ENCODE measurements at regions of chrX and their contacts with region 1.

Region 1: GRCh38 chrX:23901805-23902204 is 5.9 kb downstream of the APOO start:
- DNase-seq: peak; percentile 60
- ATAC-seq: peak; percentile 85
- H3K4me3 ChIP-seq: no peak overlapping the region
- H3K27ac ChIP-seq: peak overlapping the region; percentile 71
- H3K4me1 ChIP-seq: peaks cover 12% of the 10 kb centered on the region
- H3K27me3 ChIP-seq: no peaks in the 10 kb centered on the region
- CTCF ChIP-seq: peak; percentile 46 to 72 (median 50); a peak in 5 of 6 replicates
- EP300 ChIP-seq: no peak
- POLR2A ChIP-seq: no peak
- RAD21 ChIP-seq: peak; percentile 73

Region 2: DNA sequence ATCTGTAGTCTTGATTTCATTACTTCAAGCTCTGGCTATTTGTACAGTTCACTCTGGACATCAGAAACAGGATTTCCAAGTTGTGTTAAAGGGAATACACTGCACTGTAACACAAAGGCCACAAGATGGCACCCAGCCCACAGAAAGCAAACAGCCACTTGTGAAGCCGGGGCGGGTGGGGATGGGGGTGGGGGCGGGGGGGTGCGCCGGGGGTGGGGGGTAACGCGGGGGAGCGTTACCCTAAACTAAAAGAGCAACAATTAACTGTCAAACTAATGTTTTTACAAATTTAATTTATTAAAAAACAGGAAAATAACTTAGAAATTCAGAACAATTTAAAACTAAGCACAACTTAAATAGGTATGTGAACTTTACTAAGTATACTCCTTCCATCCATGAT is 207.2 kb before region 1 on chrX:
- CTCF ChIA-PET with region 1: interaction called, 154 read pairs
- POLR2A ChIA-PET with region 1: interaction called, 7 read pairs
- RAD21 ChIA-PET with region 1: interaction called, 59 read pairs
- SMC1A ChIA-PET with region 1: interaction called, 71 read pairs
- in situ Hi-C with region 1: loop called (anchors 5 kb)
- intact Hi-C with region 1: loop called (anchors 1 kb)
- DNase-seq: peak; percentile 11
- ATAC-seq: peak; percentile 90
- H3K4me3 ChIP-seq: no peak overlapping the region
- H3K27ac ChIP-seq: no peak overlapping the region
- H3K4me1 ChIP-seq: no peaks in the 10 kb centered on the region
- H3K27me3 ChIP-seq: no peaks in the 10 kb centered on the region
- CTCF ChIP-seq: peak; percentile 37 to 70 (median 63); a peak in 5 of 6 replicates
- EP300 ChIP-seq: no peak
- POLR2A ChIP-seq: no peak
- RAD21 ChIP-seq: peak; percentile 76

Region 3: GRCh38 chrX:23732704-23733103 is 169.1 kb before region 1 on chrX:
- CTCF ChIA-PET with region 1: interaction called, 21 read pairs
- POLR2A ChIA-PET with region 1: no interaction called
- RAD21 ChIA-PET with region 1: interaction called, 6 read pairs
- SMC1A ChIA-PET with region 1: interaction called, 8 read pairs
- in situ Hi-C with region 1: no loop called
- intact Hi-C with region 1: no loop called
- DNase-seq: peak; percentile 65
- ATAC-seq: peak; percentile 89
- H3K4me3 ChIP-seq: no peak overlapping the region
- H3K27ac ChIP-seq: peak overlapping the region; percentile 69
- H3K4me1 ChIP-seq: peaks cover 6% of the 10 kb centered on the region
- H3K27me3 ChIP-seq: no peaks in the 10 kb centered on the region
- CTCF ChIP-seq: no peak
- EP300 ChIP-seq: peak; percentile 98
- POLR2A ChIP-seq: no peak
- RAD21 ChIP-seq: no peak

Region 4: DNA sequence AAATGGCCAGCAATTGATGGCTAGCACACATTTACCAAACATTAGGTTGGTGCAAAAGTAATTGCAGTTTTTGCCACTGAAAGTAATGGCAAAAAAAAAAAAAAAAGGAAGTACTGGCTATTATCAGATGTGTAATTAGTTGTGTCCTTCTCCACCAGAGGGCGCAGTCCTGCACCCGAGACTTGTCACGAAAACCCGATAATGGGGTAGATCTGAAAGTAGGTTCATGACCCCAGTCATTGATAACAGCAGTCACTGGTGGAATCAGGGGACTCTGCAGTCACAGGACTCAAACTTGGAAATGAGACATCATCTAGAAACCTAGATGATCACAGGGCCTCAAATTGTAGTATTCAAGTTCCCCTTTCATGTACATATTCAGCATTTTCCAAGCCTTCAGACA is 145.6 kb before region 1 on chrX:
- CTCF ChIA-PET with region 1: interaction called, 20 read pairs
- POLR2A ChIA-PET with region 1: no interaction called
- RAD21 ChIA-PET with region 1: interaction called, 22 read pairs
- SMC1A ChIA-PET with region 1: interaction called, 16 read pairs
- in situ Hi-C with region 1: loop called (anchors 10 kb)
- intact Hi-C with region 1: loop called (anchors 1 kb)
- DNase-seq: peak; percentile 50
- ATAC-seq: peak; percentile 93
- H3K4me3 ChIP-seq: no peak overlapping the region
- H3K27ac ChIP-seq: no peak overlapping the region
- H3K4me1 ChIP-seq: no peaks in the 10 kb centered on the region
- H3K27me3 ChIP-seq: no peaks in the 10 kb centered on the region
- CTCF ChIP-seq: peak; percentile 55 to 60 (median 59)
- EP300 ChIP-seq: peak in 1 of 2 experiments; percentile 45; a peak in 2 of 4 replicates
- POLR2A ChIP-seq: no peak
- RAD21 ChIP-seq: peak; percentile 43

Region 5: GRCh38 chrX:23782863-23783568 is 118.8 kb before region 1 on chrX and contains the start of gene SAT1:
- CTCF ChIA-PET with region 1: interaction called, 123 read pairs
- POLR2A ChIA-PET with region 1: interaction called, 26 read pairs
- RAD21 ChIA-PET with region 1: interaction called, 96 read pairs
- SMC1A ChIA-PET with region 1: interaction called, 82 read pairs
- in situ Hi-C with region 1: loop called (anchors 5 kb)
- intact Hi-C with region 1: loop called (anchors 1 kb)
- DNase-seq: peak; percentile 65
- ATAC-seq: peak; percentile 88
- H3K4me3 ChIP-seq: peak within 1 kb of the TSS; percentile 75
- H3K27ac ChIP-seq: peak within 1 kb of the TSS; percentile 82
- H3K4me1 ChIP-seq: no peaks in the 10 kb centered on the region
- H3K27me3 ChIP-seq: no peaks in the 10 kb centered on the region
- CTCF ChIP-seq: peak; percentile 64 to 74 (median 65)
- EP300 ChIP-seq: no peak
- POLR2A ChIP-seq: peak; percentile 100
- RAD21 ChIP-seq: peak; percentile 65
- polyA plus RNA-seq, gene SAT1: 155 to 162 TPM

Region 6: DNA sequence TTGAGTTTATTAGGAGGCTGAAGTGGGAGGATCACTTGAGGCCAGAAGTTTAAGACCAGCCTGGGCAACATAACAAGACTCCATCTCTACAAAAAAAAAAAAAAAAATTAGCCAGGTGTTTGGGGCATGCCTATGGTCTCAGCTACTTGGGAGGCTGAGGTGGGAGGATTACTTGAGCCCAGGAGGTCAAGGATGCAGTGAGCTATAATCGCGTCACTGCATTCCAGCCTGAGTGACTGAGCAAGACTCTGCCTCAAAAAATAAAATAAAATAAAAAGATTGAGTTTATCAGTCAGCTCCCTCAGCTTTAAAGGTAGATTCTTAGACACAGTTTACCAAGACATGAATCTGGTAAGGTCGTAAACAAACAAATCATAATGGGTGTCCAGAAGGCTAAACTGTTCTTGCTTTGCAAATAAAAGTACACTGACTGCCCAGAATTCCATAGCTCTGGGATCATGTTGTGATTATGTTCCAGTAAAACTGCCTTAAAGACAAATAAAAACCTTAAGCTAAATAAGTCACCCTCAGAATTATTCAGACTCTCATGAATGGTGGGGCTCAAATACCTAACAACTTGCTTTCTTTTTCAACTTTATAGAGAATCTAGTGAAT is 12.8 kb before region 1 on chrX:
- CTCF ChIA-PET with region 1: interaction called, 14 read pairs
- POLR2A ChIA-PET with region 1: interaction called, 4 read pairs
- RAD21 ChIA-PET with region 1: interaction called, 6 read pairs
- SMC1A ChIA-PET with region 1: interaction called, 13 read pairs
- in situ Hi-C with region 1: no loop called
- intact Hi-C with region 1: no loop called
- DNase-seq: no peak
- ATAC-seq: no peak
- H3K4me3 ChIP-seq: no peak overlapping the region
- H3K27ac ChIP-seq: no peak overlapping the region
- H3K4me1 ChIP-seq: no peaks in the 10 kb centered on the region
- H3K27me3 ChIP-seq: no peaks in the 10 kb centered on the region
- CTCF ChIP-seq: no peak
- EP300 ChIP-seq: no peak
- POLR2A ChIP-seq: no peak
- RAD21 ChIP-seq: no peak

Region 7: DNA sequence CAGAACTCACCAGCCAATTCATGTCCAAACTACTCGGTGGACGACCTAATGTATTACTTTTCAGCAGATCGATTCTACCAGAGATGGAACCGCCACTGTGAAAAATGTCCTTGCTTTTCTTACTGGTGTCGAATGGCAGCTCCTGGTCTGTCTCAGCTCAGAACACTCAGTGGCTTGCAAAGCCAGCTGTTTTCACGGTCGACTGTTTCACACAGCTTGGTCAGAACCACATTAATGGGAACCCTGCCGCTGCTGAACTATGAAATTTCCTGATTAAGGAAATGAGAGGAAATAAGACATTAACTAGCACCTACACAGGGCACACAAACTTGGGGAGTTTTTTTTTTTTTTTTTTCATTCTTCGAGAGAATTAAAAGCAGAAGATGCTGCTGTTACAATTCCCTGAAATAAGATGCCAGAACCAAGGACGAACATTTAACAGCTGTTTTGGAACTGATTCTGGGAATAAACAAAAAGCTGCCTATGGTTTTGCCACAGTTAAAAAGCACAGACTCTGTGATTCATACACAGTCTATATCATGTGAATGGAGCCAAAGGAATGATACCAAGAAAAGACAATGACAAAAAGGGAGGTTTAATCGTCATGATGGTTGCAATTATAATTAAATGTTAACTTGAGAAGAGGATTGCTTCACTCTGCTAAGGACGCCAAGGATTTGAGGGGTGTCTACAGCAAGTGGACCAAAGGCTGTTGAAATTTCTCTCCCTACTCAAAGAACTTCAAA is 380.7 kb after region 1 on chrX:
- CTCF ChIA-PET with region 1: no interaction called
- POLR2A ChIA-PET with region 1: no interaction called
- RAD21 ChIA-PET with region 1: no interaction called
- SMC1A ChIA-PET with region 1: no interaction called
- in situ Hi-C with region 1: no loop called
- intact Hi-C with region 1: no loop called
- DNase-seq: no peak
- ATAC-seq: peak; percentile 50; the same call in 2 of the 3 replicates
- H3K4me3 ChIP-seq: no peak overlapping the region
- H3K27ac ChIP-seq: no peak overlapping the region
- H3K4me1 ChIP-seq: no peaks in the 10 kb centered on the region
- H3K27me3 ChIP-seq: no peaks in the 10 kb centered on the region; a peak in 1 of 4 replicates
- CTCF ChIP-seq: no peak
- EP300 ChIP-seq: no peak
- POLR2A ChIP-seq: no peak
- RAD21 ChIP-seq: no peak

Measured in GM12878 (cell line).